OCI-LY7 (cell line): ENCODE measurements at regions of chr5 and their contacts with region 1.

Region 1: DNA sequence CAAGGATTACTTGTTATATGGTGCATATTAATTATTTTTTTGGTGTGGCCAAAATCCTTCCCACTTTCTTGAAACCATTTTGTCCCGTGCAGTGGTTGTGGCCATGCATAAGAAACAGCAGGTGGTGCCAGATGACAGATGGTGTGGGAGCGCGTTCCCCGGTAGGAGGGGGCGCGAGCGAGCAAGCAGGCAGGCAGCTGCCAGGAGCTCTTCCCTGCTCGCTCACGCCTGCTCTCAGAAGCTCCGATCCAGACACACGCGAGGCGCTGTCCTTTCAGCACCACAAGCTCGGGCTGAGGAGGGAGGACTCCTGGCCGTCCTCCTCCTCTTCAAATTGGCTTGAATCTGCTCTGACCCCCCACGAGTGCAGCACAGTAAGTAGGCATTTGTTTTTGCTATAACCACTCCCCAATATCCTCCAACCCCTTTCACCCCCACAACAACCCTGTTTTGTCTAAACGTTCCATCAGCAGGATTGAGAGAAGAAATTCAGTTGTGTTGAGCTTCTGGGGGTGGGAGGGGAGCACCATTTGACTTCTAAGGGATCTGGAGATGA is at the start of gene NSG2:
- DNase-seq: peak; percentile 85
- H3K4me3 ChIP-seq: no peak within 1 kb of the TSS
- H3K27ac ChIP-seq: no peak within 1 kb of the TSS
- H3K4me1 ChIP-seq: no peaks in the 10 kb centered on the region
- CTCF ChIP-seq: peak; percentile 95
- total RNA-seq, gene NSG2: not detected in 2 replicates

Region 2: DNA sequence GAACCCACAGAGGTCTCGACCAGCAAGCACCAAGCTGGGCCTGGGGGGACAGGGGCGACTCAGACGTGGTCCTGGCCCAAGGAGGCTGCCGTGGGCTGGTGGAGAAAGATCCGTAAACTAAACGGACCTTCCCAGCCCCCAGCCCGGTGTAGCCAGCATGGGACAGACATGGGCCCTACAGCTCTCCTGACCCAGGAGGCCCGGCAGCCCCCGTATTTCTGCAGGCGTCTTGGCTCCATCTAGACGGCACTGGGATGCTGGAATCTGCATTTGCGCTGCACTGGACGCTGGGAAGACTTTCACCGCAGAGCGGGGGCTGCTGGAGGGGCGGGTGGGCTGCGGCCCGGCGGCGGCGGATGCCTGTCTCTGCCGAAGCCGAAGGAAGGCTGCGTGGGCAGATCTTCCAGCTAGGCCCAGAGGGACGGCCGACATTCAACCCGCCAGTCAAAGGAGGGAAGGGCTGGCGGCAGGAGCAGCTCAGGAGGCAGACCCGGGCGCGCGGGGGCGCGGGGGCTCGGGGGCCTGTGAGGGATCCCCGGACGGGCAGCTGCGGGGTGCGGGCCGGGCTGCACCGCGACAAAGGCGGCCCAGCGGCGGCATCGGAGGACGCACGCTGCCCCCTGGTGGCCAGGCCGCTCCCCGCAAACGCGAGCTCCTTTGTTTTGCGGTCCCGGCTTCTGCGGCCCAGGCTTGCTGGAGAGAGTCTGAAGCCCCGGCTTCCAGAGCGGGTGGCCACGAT is 266.2 kb after region 1 on chr5:
- CTCF ChIA-PET with region 1: interaction called, 4 read pairs
- POLR2A ChIA-PET with region 1: no interaction called
- intact Hi-C with region 1: loop called (anchors 1 kb)
- DNase-seq: peak; percentile 27
- H3K4me3 ChIP-seq: no peak overlapping the region
- H3K27ac ChIP-seq: no peak overlapping the region
- H3K4me1 ChIP-seq: no peaks in the 10 kb centered on the region
- CTCF ChIP-seq: peak; percentile 76

Region 3: GRCh38 chr5:174317259-174317894 is 271.8 kb after region 1 on chr5:
- CTCF ChIA-PET with region 1: no interaction called
- POLR2A ChIA-PET with region 1: no interaction called
- intact Hi-C with region 1: loop called (anchors 1 kb)
- DNase-seq: peak; percentile 30
- H3K4me3 ChIP-seq: no peak overlapping the region
- H3K27ac ChIP-seq: no peak overlapping the region
- H3K4me1 ChIP-seq: no peaks in the 10 kb centered on the region
- CTCF ChIP-seq: peak; percentile 79